ENCODE measurements at regions of chr12 and their contacts with region 1.

Region 1: DNA sequence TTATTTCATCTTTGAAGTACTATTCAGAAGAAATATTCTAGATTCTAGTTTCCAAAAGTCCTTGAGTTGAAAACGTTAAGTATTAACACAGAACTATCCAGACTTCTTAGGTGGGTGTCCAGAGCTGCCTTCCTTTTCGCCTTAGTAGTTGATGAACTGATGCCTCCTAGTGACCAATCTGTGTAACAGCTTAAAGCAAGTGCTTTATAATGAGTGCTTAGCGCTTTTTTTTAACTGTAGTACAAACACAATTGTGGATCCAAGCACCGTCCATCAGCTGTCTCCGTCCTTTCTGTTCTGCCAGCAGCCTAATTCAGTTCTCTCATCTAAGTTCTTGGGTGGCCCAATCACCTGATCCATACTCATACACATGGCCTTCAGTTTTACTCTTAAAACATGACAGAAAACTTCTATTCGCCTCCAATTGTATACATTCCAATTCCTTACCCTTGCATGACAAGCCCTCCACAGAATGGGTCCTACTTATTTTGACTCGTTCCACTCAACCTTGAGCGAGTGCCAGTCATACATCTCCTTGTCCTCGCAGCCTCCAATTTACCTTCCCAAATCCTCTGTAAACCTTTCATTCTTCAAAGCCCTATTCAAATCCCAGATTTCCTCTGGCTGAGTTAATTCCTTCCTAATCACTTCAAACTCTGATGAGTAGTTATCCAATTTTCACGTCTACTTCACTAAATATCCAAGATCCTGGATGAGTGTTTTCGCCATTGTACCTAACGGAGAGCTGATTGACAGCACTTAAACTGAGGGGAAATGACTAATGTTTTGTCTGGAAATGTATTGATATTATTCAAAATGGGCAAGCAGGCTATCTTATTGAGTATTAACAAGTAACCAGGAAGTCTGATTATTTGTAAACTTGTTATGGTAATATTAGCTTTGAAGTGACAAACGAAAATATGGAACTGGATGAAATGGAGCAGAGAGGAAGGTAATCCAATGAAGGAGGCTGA is 5.8 kb upstream of the PHLDA1 start:
- DNase-seq: peak in 7 of 9 donors; percentile 46 to 63 (median 55)
- ATAC-seq: peak; percentile 87
- H3K4me3 ChIP-seq: no peak overlapping the region
- H3K4me3 Mint-ChIP-seq: no peak overlapping the region
- H3K27ac ChIP-seq: no peak overlapping the region
- H3K27ac Mint-ChIP-seq: peak overlapping the region in 1 of 9 donors; percentile 1
- H3K4me1 ChIP-seq: peaks cover 0 to 4% of the 10 kb centered on the region in 2 donors
- H3K4me1 Mint-ChIP-seq: peaks cover 5 to 29% (median 12%) of the 10 kb centered on the region in 7 donors
- H3K27me3 ChIP-seq: no peaks in the 10 kb centered on the region
- H3K27me3 Mint-ChIP-seq: no peaks in the 10 kb centered on the region

Region 2: DNA sequence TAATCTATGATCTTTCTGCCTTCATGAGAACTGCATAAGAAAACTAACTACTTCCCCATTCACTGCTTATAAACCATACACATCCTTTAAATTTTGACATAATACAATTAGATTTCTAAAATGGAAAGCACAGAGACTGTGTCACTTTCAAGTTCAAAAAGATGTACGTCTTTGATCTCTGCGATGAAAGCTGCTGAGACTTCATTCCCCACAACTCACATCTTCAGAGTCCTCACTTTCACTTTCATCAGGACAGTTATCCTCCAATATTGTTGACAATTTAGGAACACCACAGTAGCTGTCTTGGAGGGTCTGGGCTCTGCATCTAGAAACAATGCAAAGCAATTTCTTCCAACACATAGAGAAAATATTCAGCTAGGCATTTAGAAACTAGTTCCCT is 779.9 kb before region 1 on chr12:
- CTCF ChIA-PET with region 1: no interaction called
- POLR2A ChIA-PET with region 1: no interaction called
- intact Hi-C with region 1: no loop called
- DNase-seq: peak in 6 of 9 donors; percentile 7 to 59 (median 39)
- ATAC-seq: peak; percentile 63
- H3K4me3 ChIP-seq: no peak overlapping the region
- H3K4me3 Mint-ChIP-seq: peak overlapping the region in 8 of 10 donors; percentile 3 to 79 (median 42)
- H3K27ac ChIP-seq: no peak overlapping the region
- H3K27ac Mint-ChIP-seq: peak overlapping the region in 7 of 9 donors; percentile 16 to 69 (median 33)
- H3K4me1 ChIP-seq: no peaks in the 10 kb centered on the region
- H3K4me1 Mint-ChIP-seq: peaks cover 9 to 31% (median 12%) of the 10 kb centered on the region in 7 donors
- H3K27me3 ChIP-seq: no peaks in the 10 kb centered on the region
- H3K27me3 Mint-ChIP-seq: no peaks in the 10 kb centered on the region

Region 3: GRCh38 chr12:75334384-75335030 is 702.9 kb before region 1 on chr12 and contains the start of gene GLIPR1L1:
- CTCF ChIA-PET with region 1: interaction called, 4 read pairs
- POLR2A ChIA-PET with region 1: interaction called, 3 read pairs
- intact Hi-C with region 1: loop called (anchors 1 to 2 kb)
- DNase-seq: peak; percentile 58 to 79 (median 74)
- ATAC-seq: peak; percentile 91
- H3K4me3 ChIP-seq: no peak within 1 kb of the TSS
- H3K4me3 Mint-ChIP-seq: peak within 1 kb of the TSS; percentile 18 to 80 (median 74)
- H3K27ac ChIP-seq: no peak within 1 kb of the TSS
- H3K27ac Mint-ChIP-seq: peak within 1 kb of the TSS in 1 of 9 donors; percentile 3
- H3K4me1 ChIP-seq: peaks cover 0 to 5% of the 10 kb centered on the region in 2 donors
- H3K4me1 Mint-ChIP-seq: peaks cover 11 to 29% (median 18%) of the 10 kb centered on the region in 7 donors
- H3K27me3 ChIP-seq: peaks cover 0 to 6% of the 10 kb centered on the region in 2 donors
- H3K27me3 Mint-ChIP-seq: peaks cover 16 to 56% (median 31%) of the 10 kb centered on the region in 5 donors
- total RNA-seq, gene GLIPR1L1: not detected

Region 4: GRCh38 chr12:75526655-75527511 is 510.5 kb before region 1 on chr12:
- CTCF ChIA-PET with region 1: interaction called, 10 read pairs
- POLR2A ChIA-PET with region 1: interaction called, 3 read pairs
- intact Hi-C with region 1: loop called (anchors 1 kb)
- DNase-seq: peak in 6 of 9 donors; percentile 10 to 26 (median 18)
- ATAC-seq: peak; percentile 53
- H3K4me3 ChIP-seq: no peak overlapping the region
- H3K4me3 Mint-ChIP-seq: no peak overlapping the region
- H3K27ac ChIP-seq: no peak overlapping the region
- H3K27ac Mint-ChIP-seq: peak overlapping the region in 1 of 9 donors; percentile 21
- H3K4me1 ChIP-seq: no peaks in the 10 kb centered on the region
- H3K4me1 Mint-ChIP-seq: peaks cover 0 to 7% (median 2%) of the 10 kb centered on the region in 7 donors
- H3K27me3 ChIP-seq: no peaks in the 10 kb centered on the region
- H3K27me3 Mint-ChIP-seq: peaks cover 32 to 40% (median 38%) of the 10 kb centered on the region in 5 donors

Region 5: DNA sequence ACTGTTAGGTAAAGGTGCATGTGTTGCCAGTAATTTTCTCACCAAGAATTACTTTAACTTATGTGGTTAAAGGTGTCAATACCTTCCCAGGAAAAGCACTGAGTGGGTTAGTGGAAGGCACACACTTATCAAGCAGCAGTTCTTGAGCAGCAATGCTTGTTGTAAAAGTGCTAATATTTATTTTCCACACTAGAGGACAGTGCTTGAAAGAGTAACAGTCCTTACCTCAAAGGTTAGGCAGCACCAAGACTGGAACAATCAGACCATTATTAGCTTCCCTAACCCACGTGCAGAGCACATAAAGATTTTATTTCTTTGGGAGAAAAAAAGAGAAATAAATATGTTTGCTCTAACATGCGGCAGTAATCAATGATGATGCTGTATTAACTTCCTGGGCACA is 477.2 kb before region 1 on chr12:
- CTCF ChIA-PET with region 1: no interaction called
- POLR2A ChIA-PET with region 1: no interaction called
- intact Hi-C with region 1: loop called in 1 of 2 experiments (anchors 1 kb)
- DNase-seq: no peak
- ATAC-seq: no peak
- H3K4me3 ChIP-seq: no peak overlapping the region
- H3K4me3 Mint-ChIP-seq: no peak overlapping the region
- H3K27ac ChIP-seq: no peak overlapping the region
- H3K27ac Mint-ChIP-seq: no peak overlapping the region
- H3K4me1 ChIP-seq: no peaks in the 10 kb centered on the region
- H3K4me1 Mint-ChIP-seq: peaks cover 0 to 2% (median 0%) of the 10 kb centered on the region in 7 donors
- H3K27me3 ChIP-seq: no peaks in the 10 kb centered on the region
- H3K27me3 Mint-ChIP-seq: peaks cover 10 to 32% (median 27%) of the 10 kb centered on the region in 5 donors

Region 6: GRCh38 chr12:75641031-75641780 is 396.2 kb before region 1 on chr12:
- CTCF ChIA-PET with region 1: no interaction called
- POLR2A ChIA-PET with region 1: no interaction called
- intact Hi-C with region 1: loop called in 1 of 2 experiments (anchors 1 kb)
- DNase-seq: peak in 1 of 9 donors; percentile 55
- ATAC-seq: peak; percentile 74
- H3K4me3 ChIP-seq: no peak overlapping the region
- H3K4me3 Mint-ChIP-seq: peak overlapping the region in 1 of 10 donors; percentile 20
- H3K27ac ChIP-seq: no peak overlapping the region
- H3K27ac Mint-ChIP-seq: peak overlapping the region in 1 of 9 donors; percentile 53
- H3K4me1 ChIP-seq: peaks cover 0 to 11% of the 10 kb centered on the region in 2 donors
- H3K4me1 Mint-ChIP-seq: peaks cover 0 to 20% (median 0%) of the 10 kb centered on the region in 7 donors
- H3K27me3 ChIP-seq: no peaks in the 10 kb centered on the region
- H3K27me3 Mint-ChIP-seq: peaks cover 1 to 10% (median 6%) of the 10 kb centered on the region in 5 donors

Region 7: GRCh38 chr12:75814851-75815754 is 222.3 kb before region 1 on chr12:
- CTCF ChIA-PET with region 1: interaction called, 5 read pairs
- POLR2A ChIA-PET with region 1: no interaction called
- intact Hi-C with region 1: loop called (anchors 1 kb)
- DNase-seq: peak in 1 of 9 donors; percentile 5
- ATAC-seq: peak; percentile 34
- H3K4me3 ChIP-seq: no peak overlapping the region
- H3K4me3 Mint-ChIP-seq: no peak overlapping the region
- H3K27ac ChIP-seq: no peak overlapping the region
- H3K27ac Mint-ChIP-seq: no peak overlapping the region
- H3K4me1 ChIP-seq: peaks cover 0 to 7% of the 10 kb centered on the region in 2 donors
- H3K4me1 Mint-ChIP-seq: peaks cover 0 to 18% (median 0%) of the 10 kb centered on the region in 7 donors
- H3K27me3 ChIP-seq: no peaks in the 10 kb centered on the region
- H3K27me3 Mint-ChIP-seq: peaks cover 0 to 7% (median 5%) of the 10 kb centered on the region in 5 donors